ENCODE measurements at regions of chr17 and their contacts with region 1.

Region 1: DNA sequence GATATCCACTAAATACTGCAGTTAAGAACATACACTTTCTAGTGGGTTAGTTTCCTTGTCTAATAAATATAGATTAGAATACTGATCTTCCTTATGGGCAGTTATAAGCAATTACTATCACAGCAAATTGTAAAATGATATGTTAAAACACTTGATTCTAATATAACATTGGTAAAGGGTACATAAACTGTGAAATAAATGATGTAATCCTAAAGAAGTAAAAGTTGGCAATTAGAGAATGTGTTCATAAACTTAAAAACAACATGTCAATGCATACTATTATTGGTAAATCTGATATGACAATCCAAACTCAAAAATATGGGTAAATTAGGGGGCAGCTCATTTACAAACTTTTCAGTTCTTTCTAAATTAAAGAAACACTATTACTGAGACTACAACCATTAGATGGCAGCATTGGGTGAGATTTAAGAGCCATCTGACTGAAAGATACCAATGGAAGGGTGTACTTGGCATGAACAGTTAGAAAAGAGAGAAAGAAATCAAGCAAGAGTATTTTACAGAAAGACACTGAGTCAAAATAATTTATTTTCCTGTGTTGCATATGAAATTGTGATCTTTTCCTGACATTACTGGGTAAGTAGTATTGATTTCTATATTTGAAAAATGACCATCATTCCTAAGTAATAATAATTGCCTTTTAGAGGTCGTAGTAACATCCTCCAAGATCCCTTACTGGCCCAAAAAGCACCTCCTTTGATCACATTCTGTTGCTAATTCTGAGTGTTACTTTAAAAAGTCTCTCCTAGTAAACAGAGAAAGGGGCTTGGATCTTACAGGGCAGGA is 119.6 kb downstream of the SPAG9 start:
- DNase-seq: peak; percentile 33 to 67
- H3K4me3 ChIP-seq: no peak overlapping the region
- H3K4me1 ChIP-seq: no peaks in the 10 kb centered on the region
- H3K27me3 ChIP-seq: no peaks in the 10 kb centered on the region

Region 2: GRCh38 chr17:51064061-51064735 is 63.2 kb after region 1 on chr17:
- in situ Hi-C with region 1: loop called (anchors 5 kb)
- DNase-seq: no peak
- H3K4me3 ChIP-seq: no peak overlapping the region
- H3K4me1 ChIP-seq: no peaks in the 10 kb centered on the region; the same call in 1 of the 2 replicates
- H3K27me3 ChIP-seq: no peaks in the 10 kb centered on the region

Region 3: DNA sequence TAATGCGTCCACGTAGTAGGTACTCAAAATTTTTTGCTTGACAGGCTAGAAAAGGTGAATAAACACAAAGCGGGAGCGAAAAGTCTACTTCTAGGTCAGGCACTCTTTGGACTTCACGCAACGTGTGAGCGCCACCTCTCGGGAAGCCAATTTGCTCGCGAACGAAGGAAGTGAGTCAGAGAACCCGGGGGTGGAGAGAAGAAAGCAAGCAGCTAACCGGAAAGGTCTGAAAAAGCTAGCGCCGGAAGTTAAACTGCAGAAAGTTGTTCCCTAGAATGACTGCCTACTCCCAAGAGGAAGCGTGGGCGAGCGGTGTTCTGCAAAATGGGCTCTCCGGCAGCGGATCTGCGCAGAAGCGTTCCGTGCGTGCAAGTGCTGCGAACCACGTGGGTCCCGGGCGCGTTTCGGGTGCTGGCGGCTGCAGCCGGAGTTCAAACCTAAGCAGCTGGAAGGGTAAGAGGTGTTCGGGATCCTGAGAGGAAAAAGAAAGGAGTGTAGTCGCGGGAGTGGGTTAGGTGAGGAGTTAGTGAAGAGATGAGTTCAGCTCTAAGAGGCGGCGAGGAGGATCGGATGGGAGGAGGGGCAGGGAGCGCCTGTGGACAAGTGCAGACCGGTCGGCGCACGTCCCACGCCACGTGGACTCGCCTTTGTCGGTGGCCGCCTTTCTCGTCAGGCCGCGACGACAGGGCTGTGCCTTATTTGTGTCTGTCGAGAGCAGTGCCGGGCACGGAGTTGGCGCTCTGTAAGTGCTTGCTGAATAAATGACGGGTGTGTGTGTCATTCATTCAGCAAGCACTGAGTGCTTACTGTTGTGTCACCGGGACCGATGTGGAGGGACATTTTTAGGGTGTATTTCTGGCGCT is 152.4 kb after region 1 on chr17 and contains the start of gene NME1:
- in situ Hi-C with region 1: loop called (anchors 5 kb)
- DNase-seq: peak; percentile 96 to 100
- H3K4me3 ChIP-seq: peak within 1 kb of the TSS; percentile 79
- H3K4me1 ChIP-seq: peaks cover 13% of the 10 kb centered on the region
- H3K27me3 ChIP-seq: no peaks in the 10 kb centered on the region

Measured in HAP-1 (cell line).